ENCODE measurements at regions of chr1 and their contacts with region 1.

Region 1: GRCh38 chr1:205791568-205792180 is 16.4 kb upstream of the RAB29 start:
- DNase-seq: peak; percentile 70
- ATAC-seq: peak; percentile 96
- H3K4me3 Mint-ChIP-seq: no peak overlapping the region
- H3K27ac Mint-ChIP-seq: no peak overlapping the region
- H3K4me1 Mint-ChIP-seq: 0 out of 2 replicates have a peak, but pooled peaks cover 6% of the 10 kb centered on the region
- H3K27me3 Mint-ChIP-seq: no peaks in the 10 kb centered on the region
- CTCF ChIP-seq: peak; percentile 73

Region 2: GRCh38 chr1:205805082-205805712 is 13.5 kb after region 1 on chr1:
- CTCF ChIA-PET with region 1: interaction called, 21 read pairs
- POLR2A ChIA-PET with region 1: no interaction called
- DNase-seq: no peak
- ATAC-seq: no peak
- H3K4me3 Mint-ChIP-seq: no peak overlapping the region
- H3K27ac Mint-ChIP-seq: no peak overlapping the region
- H3K4me1 Mint-ChIP-seq: peaks cover 4% of the 10 kb centered on the region; the same call in 1 of the 2 replicates
- H3K27me3 Mint-ChIP-seq: no peaks in the 10 kb centered on the region
- CTCF ChIP-seq: no peak

Region 3: DNA sequence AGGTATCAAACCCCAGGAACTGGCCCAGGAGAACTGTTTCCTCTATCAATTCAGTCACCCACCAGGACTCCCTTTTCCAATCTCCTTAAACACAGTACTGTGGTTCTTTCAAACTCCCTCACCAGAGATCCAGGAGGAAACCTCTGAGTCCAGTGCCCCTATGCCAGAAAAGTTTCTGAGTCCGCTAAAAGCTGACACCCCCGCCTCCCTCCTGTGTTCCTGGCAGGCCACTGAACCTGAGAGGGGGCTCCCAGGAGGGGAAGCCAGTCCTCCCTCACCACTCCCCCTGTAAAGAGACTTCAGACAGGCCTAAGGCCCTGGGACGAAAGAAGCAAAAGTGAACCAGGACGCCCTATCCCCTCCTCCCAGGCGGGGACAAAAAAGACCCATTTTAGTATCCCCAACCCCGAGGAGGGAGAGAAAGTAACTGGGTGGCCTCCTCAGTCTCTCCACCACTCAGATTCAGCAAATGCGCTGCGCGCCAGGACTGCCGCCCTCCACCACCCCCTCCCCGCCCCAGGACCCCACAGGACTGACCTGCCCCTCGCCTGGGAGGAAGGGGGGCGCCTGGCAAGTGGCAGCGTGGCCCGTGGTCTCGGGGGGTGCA is 20.7 kb after region 1 on chr1:
- CTCF ChIA-PET with region 1: interaction called, 21 read pairs
- POLR2A ChIA-PET with region 1: no interaction called
- DNase-seq: peak; percentile 43
- ATAC-seq: peak; percentile 31
- H3K4me3 Mint-ChIP-seq: peak overlapping the region; percentile 90
- H3K27ac Mint-ChIP-seq: peak overlapping the region; percentile 10
- H3K4me1 Mint-ChIP-seq: peaks cover 37% of the 10 kb centered on the region
- H3K27me3 Mint-ChIP-seq: peaks cover 16% of the 10 kb centered on the region; the same call in 1 of the 2 replicates
- CTCF ChIP-seq: no peak

Region 4: DNA sequence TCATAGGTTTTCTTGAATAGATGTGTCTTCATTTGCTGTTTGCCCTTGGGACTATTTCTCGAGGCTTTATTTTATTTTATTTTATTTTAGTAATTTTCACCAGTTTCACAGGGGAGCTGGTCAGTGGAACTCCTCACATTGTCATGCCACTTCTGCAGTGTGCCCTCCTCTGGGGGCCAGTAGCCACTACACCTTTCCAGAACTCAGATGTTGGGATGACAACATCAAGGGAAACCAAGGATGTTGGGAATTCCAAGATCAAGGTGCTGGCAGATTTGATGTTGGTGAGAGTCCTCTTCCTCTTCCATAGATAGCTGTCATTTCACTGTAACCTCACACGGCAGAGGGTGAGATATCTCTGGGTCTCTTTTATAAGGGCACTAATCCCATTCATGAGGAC is 116.1 kb after region 1 on chr1:
- CTCF ChIA-PET with region 1: interaction called, 32 read pairs
- POLR2A ChIA-PET with region 1: no interaction called
- DNase-seq: peak; percentile 57
- ATAC-seq: peak; percentile 92
- H3K4me3 Mint-ChIP-seq: no peak overlapping the region
- H3K27ac Mint-ChIP-seq: no peak overlapping the region
- H3K4me1 Mint-ChIP-seq: peaks cover 3% of the 10 kb centered on the region
- H3K27me3 Mint-ChIP-seq: no peaks in the 10 kb centered on the region; the same call in none of the 2 replicates
- CTCF ChIP-seq: peak; percentile 28; the same call in 1 of the 2 replicates